SK-N-SH (cell line): ENCODE measurements at regions of chr17 and their contacts with region 1.

Region 1: DNA sequence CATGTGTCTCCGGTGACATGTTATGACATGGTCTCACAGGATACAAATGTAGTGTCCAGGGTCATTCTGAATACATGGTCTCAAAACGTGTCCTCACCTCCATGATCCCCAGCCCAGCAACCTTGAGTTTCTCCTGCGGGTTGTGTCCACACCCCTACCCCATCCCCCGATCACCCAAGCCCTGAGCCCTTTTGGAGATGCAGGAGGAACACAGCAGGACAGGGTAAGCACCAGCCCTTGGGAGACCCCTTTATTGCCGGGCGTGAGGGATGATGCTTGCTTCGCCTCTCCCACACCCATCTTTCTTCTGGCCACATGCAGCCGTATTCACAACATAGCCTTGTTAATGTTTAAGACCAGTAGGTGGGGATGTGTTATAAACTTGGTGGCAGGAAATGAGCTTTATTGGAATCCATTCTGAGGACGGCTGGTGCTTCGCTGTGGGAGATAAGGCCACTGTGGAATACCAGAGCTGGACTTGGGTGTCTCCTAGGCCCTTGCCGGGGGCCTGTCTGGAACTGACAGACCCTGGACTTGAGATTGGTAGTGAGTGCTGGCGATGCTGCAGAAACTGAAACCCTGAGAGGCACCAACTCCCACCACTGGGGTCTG is 5.5 kb downstream of the TMEM132E start:
- DNase-seq: peak; percentile 75
- H3K4me3 ChIP-seq: no peak overlapping the region
- H3K27ac ChIP-seq: no peak overlapping the region
- H3K4me1 ChIP-seq: peaks cover 0 to 8% of the 10 kb centered on the region in 2 experiments; a peak in 1 of 4 replicates
- H3K27me3 ChIP-seq: peaks cover 66% of the 10 kb centered on the region
- CTCF ChIP-seq: peak; percentile 22; the same call in 1 of the 2 replicates
- EP300 ChIP-seq: no peak
- RAD21 ChIP-seq: peak; percentile 83

Region 2: GRCh38 chr17:34601416-34601815 is 16.5 kb after region 1 on chr17:
- CTCF ChIA-PET with region 1: interaction called, 24 read pairs
- POLR2A ChIA-PET with region 1: no interaction called
- DNase-seq: no peak
- H3K4me3 ChIP-seq: no peak overlapping the region
- H3K27ac ChIP-seq: no peak overlapping the region
- H3K4me1 ChIP-seq: peaks cover 0 to 13% of the 10 kb centered on the region in 2 experiments; a peak in 1 of 4 replicates
- H3K27me3 ChIP-seq: no peaks in the 10 kb centered on the region
- CTCF ChIP-seq: no peak
- EP300 ChIP-seq: no peak
- RAD21 ChIP-seq: no peak

Region 3: DNA sequence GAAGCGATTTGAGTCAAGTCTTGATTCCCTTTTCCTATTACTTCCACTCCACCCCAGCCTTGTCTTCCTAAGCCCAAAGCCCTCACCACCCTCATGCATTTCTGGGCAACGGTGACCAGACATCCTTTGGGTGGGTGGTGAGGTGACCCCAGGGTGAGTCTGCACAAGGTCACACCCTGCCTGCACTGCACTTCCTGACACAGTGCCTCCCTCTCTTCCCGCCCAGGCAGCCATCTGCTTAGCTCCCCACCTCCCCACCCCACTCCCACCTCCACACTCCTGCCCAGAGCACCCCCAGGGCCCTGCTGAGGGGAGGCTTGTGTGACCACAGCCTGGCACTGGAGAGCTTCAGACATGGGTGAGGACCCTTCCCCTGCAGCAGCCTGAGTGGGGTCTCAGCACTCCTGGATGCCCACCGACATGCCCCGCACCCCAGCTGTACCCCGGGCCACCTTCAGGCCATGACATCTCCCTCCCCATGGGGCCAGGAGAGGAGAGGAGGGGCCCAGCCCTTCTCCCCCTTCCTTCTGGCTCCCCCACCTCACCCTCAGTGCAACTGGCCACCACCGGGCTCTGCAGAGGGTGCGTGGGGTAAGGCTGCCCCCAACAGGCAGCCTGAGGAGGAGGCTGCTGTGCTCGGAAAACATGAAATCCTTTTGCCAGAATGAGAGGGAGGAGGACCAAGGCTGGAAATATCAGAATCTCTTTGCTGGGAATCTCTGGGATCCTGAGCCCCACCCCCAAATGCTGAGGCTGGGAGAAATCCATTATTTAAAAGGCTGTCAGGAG is 307.7 kb after region 1 on chr17:
- CTCF ChIA-PET with region 1: interaction called, 45 read pairs
- POLR2A ChIA-PET with region 1: no interaction called
- DNase-seq: peak; percentile 86
- H3K4me3 ChIP-seq: peak overlapping the region in 1 of 2 experiments; percentile 51; a peak in 1 of 4 replicates
- H3K27ac ChIP-seq: no peak overlapping the region
- H3K4me1 ChIP-seq: no peaks in the 10 kb centered on the region
- H3K27me3 ChIP-seq: no peaks in the 10 kb centered on the region
- CTCF ChIP-seq: peak; percentile 50
- EP300 ChIP-seq: no peak
- RAD21 ChIP-seq: peak; percentile 91